Body of pancreas (tissue), 4 donors: ENCODE measurements at regions of chr11 and their contacts with region 1.

Region 1: DNA sequence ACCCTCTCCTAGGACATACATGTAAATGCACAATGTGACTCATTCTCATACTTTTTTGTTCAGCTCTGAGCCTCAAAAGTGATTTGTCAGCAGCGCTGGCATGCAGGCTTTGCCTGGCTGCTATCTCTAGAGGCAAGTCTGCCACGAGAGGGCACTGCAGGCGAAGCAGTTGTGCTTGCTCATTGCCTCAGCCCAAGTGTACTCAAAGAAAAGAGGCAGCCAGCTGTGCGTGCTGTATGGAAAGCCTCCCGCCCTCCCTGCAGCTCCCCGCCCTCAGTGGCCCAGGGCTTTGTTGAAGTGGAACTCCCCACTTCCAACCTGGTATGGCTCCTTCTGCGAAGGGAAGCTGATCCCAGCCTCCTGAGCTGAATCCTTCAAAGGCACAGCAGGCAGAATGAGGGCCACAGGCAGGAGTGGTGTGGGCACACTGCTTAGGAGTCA is 16.3 kb downstream of the SDHAF2 start:
- DNase-seq: peak; percentile 83 to 90 (median 88)
- ATAC-seq: peak; percentile 85
- H3K4me3 ChIP-seq: no peak overlapping the region
- H3K27ac ChIP-seq: peak overlapping the region in 1 of 4 donors; percentile 46
- H3K4me1 ChIP-seq: peaks cover 5% of the 10 kb centered on the region
- H3K27me3 ChIP-seq: no peaks in the 10 kb centered on the region
- CTCF ChIP-seq: peak; percentile 33 to 84 (median 72)
- POLR2A ChIP-seq: no peak

Region 2: GRCh38 chr11:60498853-60499252 is 947.4 kb before region 1 on chr11:
- intact Hi-C with region 1: no loop called
- DNase-seq: no peak
- ATAC-seq: no peak
- H3K4me3 ChIP-seq: no peak overlapping the region
- H3K27ac ChIP-seq: no peak overlapping the region
- H3K4me1 ChIP-seq: no peaks in the 10 kb centered on the region
- H3K27me3 ChIP-seq: no peaks in the 10 kb centered on the region
- CTCF ChIP-seq: no peak
- POLR2A ChIP-seq: no peak

Region 3: DNA sequence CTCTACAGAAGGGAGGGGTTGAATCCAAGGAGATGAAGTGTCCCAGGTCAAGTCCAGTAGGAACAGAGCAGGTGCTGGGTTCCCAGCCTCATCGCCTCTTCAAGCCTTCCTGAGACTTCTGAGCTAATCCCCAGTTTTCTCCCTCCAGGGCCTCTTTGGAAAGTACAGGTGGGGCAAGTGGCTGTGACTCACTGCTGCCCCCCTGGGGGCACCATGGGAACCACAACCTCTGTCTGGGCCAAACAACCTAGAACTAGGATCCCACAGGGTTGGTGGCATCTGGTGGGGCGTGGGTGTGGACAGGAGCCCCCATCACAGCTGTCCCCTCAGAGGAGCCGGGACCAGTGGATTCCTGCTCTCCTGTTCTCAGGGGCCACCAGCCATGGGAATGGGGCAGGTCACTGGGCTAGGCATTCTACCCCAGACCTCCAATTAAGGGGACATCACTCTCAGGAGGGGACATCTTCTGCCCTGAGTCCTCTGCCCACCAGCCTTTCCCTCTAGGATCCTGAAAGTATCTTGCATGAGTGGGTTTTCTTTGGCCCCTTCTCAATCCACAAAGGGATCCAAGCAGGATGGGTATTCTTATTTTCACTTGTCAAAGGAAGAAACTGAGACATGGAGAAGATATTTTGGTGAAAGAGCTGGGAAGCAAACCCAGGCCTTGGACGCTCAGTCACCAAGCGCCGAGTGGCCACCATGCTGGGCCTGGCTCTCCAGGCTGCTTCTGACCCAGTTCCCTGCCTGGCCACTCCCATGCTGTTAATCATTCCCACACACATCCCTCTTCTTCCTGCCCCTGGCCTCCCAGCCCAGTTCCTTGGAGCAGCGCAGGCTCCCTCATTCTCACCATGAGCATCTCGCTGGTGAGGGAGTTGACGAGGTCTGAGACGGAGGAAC is 86.2 kb after region 1 on chr11:
- intact Hi-C with region 1: no loop called
- DNase-seq: peak; percentile 45 to 65 (median 51)
- ATAC-seq: peak; percentile 52
- H3K4me3 ChIP-seq: no peak overlapping the region
- H3K27ac ChIP-seq: peak overlapping the region in 1 of 4 donors; percentile 30
- H3K4me1 ChIP-seq: peaks cover 17% of the 10 kb centered on the region
- H3K27me3 ChIP-seq: no peaks in the 10 kb centered on the region
- CTCF ChIP-seq: peak; percentile 61 to 80 (median 67)
- POLR2A ChIP-seq: no peak

Region 4: DNA sequence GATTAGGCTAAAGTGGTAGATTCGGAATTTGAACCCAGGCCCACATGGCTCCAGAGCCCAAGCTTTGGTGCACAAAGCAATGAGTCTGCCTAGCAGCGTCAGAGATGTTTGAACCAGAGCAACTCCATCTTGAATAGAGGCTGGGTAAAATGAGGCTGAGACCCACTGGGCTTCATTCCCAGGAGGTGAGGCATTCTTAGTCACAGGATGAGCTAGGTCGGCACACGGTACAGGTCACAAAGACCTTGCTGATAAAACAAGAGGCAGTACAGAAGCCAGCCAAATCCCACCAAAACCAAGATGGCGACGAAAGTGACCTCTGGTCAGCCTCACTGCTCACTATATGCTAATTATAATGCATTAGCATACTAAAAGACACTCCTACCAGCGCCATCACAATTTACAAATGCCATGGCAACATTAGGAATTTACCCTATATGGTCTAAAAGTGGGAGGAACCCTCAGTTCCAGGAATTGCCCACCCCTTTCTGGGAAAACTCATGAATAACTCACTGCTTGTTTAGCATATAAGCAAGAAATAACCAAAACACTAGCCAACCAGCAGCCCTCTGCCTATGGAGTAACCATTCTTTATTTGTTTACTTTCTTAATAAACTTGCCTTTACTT is 193.7 kb after region 1 on chr11:
- intact Hi-C with region 1: loop called (anchors 10 kb)
- DNase-seq: no peak
- ATAC-seq: no peak
- H3K4me3 ChIP-seq: no peak overlapping the region
- H3K27ac ChIP-seq: no peak overlapping the region
- H3K4me1 ChIP-seq: peaks cover 6% of the 10 kb centered on the region
- H3K27me3 ChIP-seq: no peaks in the 10 kb centered on the region
- CTCF ChIP-seq: no peak
- POLR2A ChIP-seq: no peak